ENCODE measurements at regions of chr3 and their contacts with region 1.

Region 1: GRCh38 chr3:150495563-150496168 is 50.6 kb downstream of the SERP1 start:
- DNase-seq: no peak
- ATAC-seq: peak; percentile 78
- H3K4me3 ChIP-seq: no peak overlapping the region
- H3K27ac ChIP-seq: no peak overlapping the region
- H3K4me1 ChIP-seq: no peaks in the 10 kb centered on the region
- H3K27me3 ChIP-seq: no peaks in the 10 kb centered on the region
- CTCF ChIP-seq: peak; percentile 53 to 72 (median 58)
- EP300 ChIP-seq: no peak
- POLR2A ChIP-seq: no peak
- RAD21 ChIP-seq: peak; percentile 91

Region 2: DNA sequence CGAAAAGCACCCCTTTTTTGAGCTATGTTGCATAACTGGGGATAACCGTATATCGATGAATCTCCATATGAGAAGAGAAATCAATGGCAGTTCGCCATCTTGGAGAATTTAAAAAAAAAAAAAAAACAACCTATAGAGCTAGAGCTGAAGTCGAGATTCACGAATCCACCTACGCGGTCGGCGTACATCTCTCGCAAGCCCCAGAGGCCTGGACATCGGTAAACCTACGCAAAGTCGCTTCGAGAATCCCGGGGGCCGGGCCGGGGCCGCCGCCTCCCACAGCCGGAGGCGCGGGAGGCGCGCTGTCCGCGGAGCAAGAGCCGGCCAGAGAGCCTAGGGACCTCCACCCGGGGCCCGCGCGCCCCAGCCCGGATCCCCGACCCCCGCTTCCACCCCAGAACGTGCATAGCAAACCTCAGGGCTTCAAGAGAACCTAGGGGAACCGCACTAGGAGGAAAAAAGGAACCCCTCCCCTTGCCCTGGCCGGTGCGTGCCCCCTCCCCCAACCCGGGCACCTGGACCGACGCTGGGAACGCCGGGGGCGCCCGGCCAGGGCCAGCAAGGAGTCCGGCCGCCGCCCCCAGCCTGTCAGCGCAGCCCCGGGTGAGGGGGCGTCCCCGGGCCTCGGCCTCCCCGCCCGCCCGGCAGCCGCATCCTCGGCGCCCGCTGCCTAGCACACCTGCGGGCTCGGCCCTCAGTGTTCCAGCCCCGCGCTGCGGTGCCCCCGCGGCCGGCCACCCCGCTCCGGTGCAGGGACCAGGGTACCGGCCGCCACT is 525.5 kb before region 1 on chr3:
- CTCF ChIA-PET with region 1: interaction called, 3 read pairs
- POLR2A ChIA-PET with region 1: no interaction called
- RAD21 ChIA-PET with region 1: interaction called, 3 read pairs
- SMC1A ChIA-PET with region 1: interaction called, 8 read pairs
- in situ Hi-C with region 1: loop called (anchors 25 kb)
- intact Hi-C with region 1: loop called (anchors 10 kb)
- DNase-seq: peak; percentile 39
- ATAC-seq: peak; percentile 82
- H3K4me3 ChIP-seq: peak overlapping the region; percentile 66
- H3K27ac ChIP-seq: peak overlapping the region; percentile 15; the same call in 1 of the 2 replicates
- H3K4me1 ChIP-seq: no peaks in the 10 kb centered on the region
- H3K27me3 ChIP-seq: 0 out of 4 replicates have a peak, but pooled peaks cover 0 to 4% of the 10 kb centered on the region in 2 experiments
- CTCF ChIP-seq: no peak
- EP300 ChIP-seq: no peak
- POLR2A ChIP-seq: no peak
- RAD21 ChIP-seq: no peak

Region 3: DNA sequence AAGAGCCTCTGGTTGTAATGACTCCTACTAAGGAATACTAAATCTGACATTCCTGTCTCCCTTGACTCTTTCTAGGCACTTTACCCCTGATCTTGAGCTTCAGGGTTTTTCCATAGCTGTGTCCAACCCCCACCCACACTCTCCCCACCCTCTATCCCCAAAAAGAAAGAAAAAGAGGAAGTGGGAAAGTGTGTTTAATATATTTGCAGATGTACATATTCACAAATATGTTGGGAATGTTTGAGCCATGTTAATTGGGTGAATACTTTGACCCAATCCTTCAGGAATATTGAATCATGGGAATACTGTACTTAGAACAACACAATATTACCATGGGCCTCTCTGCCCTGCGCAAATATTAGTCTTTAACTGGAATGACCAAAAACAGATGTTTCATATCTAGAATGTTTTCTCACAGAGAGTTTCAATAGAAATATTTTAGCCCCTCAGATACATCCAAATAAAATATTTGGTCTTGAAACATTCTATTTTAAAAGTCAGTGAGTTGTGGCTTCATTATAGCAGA is 505.2 kb before region 1 on chr3:
- CTCF ChIA-PET with region 1: no interaction called
- POLR2A ChIA-PET with region 1: no interaction called
- RAD21 ChIA-PET with region 1: no interaction called
- SMC1A ChIA-PET with region 1: no interaction called
- in situ Hi-C with region 1: no loop called
- intact Hi-C with region 1: no loop called
- DNase-seq: no peak
- ATAC-seq: no peak
- H3K4me3 ChIP-seq: no peak overlapping the region
- H3K27ac ChIP-seq: no peak overlapping the region
- H3K4me1 ChIP-seq: no peaks in the 10 kb centered on the region
- H3K27me3 ChIP-seq: no peaks in the 10 kb centered on the region
- CTCF ChIP-seq: no peak
- EP300 ChIP-seq: no peak
- POLR2A ChIP-seq: no peak
- RAD21 ChIP-seq: no peak

Region 4: GRCh38 chr3:150232992-150233451 is 262.6 kb before region 1 on chr3:
- CTCF ChIA-PET with region 1: interaction called, 71 read pairs
- POLR2A ChIA-PET with region 1: interaction called, 3 read pairs
- RAD21 ChIA-PET with region 1: interaction called, 31 read pairs
- SMC1A ChIA-PET with region 1: interaction called, 37 read pairs
- in situ Hi-C with region 1: loop called (anchors 5 kb)
- intact Hi-C with region 1: no loop called
- DNase-seq: no peak
- ATAC-seq: no peak
- H3K4me3 ChIP-seq: no peak overlapping the region
- H3K27ac ChIP-seq: no peak overlapping the region
- H3K4me1 ChIP-seq: no peaks in the 10 kb centered on the region
- H3K27me3 ChIP-seq: no peaks in the 10 kb centered on the region
- CTCF ChIP-seq: no peak
- EP300 ChIP-seq: no peak
- POLR2A ChIP-seq: no peak
- RAD21 ChIP-seq: no peak

Region 5: DNA sequence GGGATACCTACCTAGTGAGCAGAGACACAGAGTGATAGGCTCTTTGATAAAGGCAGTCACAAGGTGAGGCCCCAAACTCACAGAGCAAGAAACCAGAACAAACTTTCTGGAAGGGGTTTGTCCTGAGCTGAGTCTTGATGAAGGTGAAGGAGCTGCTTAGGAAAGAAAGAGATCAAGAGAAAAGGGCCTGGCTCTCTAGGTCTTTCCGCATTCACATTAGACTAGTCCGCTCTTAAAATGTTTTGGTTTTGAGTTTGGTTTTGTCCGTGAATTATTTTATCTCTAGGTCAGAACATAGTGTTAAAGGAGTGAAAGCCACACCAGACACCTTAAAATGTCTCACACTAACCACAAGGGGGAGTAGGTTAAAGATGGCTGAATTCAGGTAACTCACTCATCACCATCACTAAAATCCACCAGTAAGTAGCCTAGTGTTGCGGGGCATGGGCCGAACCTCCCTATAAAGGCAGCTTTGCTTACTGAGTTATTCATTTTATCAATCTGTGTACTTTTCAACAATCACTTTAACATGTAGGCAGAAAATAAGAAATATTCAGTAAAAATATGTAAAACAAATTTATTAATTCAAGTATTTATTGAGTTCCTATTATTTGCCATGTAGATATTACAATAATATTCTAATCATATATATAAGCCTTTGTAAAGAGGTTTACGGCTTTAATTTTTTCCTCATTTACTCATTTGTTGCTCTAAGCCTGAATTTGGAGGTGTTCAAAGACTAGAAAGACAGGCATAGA is 209.1 kb before region 1 on chr3:
- CTCF ChIA-PET with region 1: interaction called, 46 read pairs
- POLR2A ChIA-PET with region 1: no interaction called
- RAD21 ChIA-PET with region 1: interaction called, 29 read pairs
- SMC1A ChIA-PET with region 1: interaction called, 18 read pairs
- in situ Hi-C with region 1: loop called (anchors 5 kb)
- intact Hi-C with region 1: loop called (anchors 1 kb)
- DNase-seq: peak; percentile 15
- ATAC-seq: peak; percentile 99
- H3K4me3 ChIP-seq: no peak overlapping the region
- H3K27ac ChIP-seq: no peak overlapping the region
- H3K4me1 ChIP-seq: no peaks in the 10 kb centered on the region
- H3K27me3 ChIP-seq: no peaks in the 10 kb centered on the region
- CTCF ChIP-seq: peak; percentile 52 to 60 (median 57); a peak in 5 of 6 replicates
- EP300 ChIP-seq: no peak
- POLR2A ChIP-seq: no peak
- RAD21 ChIP-seq: peak; percentile 75

Region 6: GRCh38 chr3:150384296-150385212 is 111.1 kb before region 1 on chr3:
- CTCF ChIA-PET with region 1: interaction called, 3 read pairs
- POLR2A ChIA-PET with region 1: interaction called, 8 read pairs
- RAD21 ChIA-PET with region 1: interaction called, 3 read pairs
- SMC1A ChIA-PET with region 1: interaction called, 6 read pairs
- in situ Hi-C with region 1: no loop called
- intact Hi-C with region 1: loop called (anchors 1 kb)
- DNase-seq: peak; percentile 97
- ATAC-seq: peak; percentile 92
- H3K4me3 ChIP-seq: peak overlapping the region; percentile 58
- H3K27ac ChIP-seq: peak overlapping the region; percentile 99
- H3K4me1 ChIP-seq: peaks cover 23% of the 10 kb centered on the region
- H3K27me3 ChIP-seq: no peaks in the 10 kb centered on the region
- CTCF ChIP-seq: peak; percentile 35 to 61 (median 60)
- EP300 ChIP-seq: no peak
- POLR2A ChIP-seq: peak; percentile 59
- RAD21 ChIP-seq: peak; percentile 47; the same call in 1 of the 2 replicates

Region 7: DNA sequence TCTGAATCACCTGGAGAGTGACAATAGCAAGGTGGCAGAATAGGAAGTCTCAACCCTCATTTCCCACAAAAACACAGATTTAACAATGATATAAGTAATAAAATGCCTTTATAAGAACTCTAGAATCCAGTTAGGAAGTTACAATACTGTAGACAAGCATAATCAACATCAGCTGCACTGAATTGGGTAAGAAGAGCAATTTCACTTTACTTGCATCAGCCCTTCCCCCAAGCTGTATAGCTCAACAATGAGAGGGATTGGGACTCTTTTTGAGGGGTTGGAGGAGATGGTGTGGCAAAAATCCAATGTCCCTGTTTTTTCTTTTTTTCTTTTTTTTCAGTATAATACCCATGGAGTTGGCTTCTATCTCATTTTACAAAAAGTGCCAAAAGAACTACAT is 12.4 kb before region 1 on chr3:
- CTCF ChIA-PET with region 1: interaction called, 4 read pairs
- POLR2A ChIA-PET with region 1: no interaction called
- RAD21 ChIA-PET with region 1: no interaction called
- SMC1A ChIA-PET with region 1: interaction called, 11 read pairs
- in situ Hi-C with region 1: no loop called
- intact Hi-C with region 1: no loop called
- DNase-seq: no peak
- ATAC-seq: no peak
- H3K4me3 ChIP-seq: no peak overlapping the region
- H3K27ac ChIP-seq: no peak overlapping the region
- H3K4me1 ChIP-seq: no peaks in the 10 kb centered on the region
- H3K27me3 ChIP-seq: no peaks in the 10 kb centered on the region
- CTCF ChIP-seq: no peak
- EP300 ChIP-seq: no peak
- POLR2A ChIP-seq: no peak
- RAD21 ChIP-seq: no peak

Region 8: DNA sequence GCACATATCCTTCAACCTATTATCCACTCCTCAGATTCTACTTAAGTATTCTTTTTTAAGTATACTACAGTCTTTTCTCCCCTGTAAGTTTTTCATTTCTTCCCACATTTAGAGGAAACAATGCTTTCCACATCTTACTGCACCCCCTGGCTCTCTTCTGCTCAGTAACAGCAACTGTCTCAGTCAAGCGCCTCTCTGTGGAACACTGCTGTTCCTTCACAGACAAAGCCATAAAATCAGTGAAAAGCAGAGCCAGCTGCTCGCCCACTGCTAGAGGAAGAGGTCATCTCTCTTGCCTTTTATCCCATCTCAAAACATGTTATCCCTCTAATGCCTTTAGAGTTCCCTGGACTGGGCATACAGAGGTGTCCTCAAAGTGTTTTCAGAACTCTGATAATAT is 25.8 kb after region 1 on chr3:
- CTCF ChIA-PET with region 1: no interaction called
- POLR2A ChIA-PET with region 1: no interaction called
- RAD21 ChIA-PET with region 1: no interaction called
- SMC1A ChIA-PET with region 1: no interaction called
- in situ Hi-C with region 1: no loop called
- intact Hi-C with region 1: no loop called
- DNase-seq: no peak
- ATAC-seq: no peak
- H3K4me3 ChIP-seq: no peak overlapping the region
- H3K27ac ChIP-seq: no peak overlapping the region
- H3K4me1 ChIP-seq: no peaks in the 10 kb centered on the region
- H3K27me3 ChIP-seq: no peaks in the 10 kb centered on the region
- CTCF ChIP-seq: no peak
- EP300 ChIP-seq: no peak
- POLR2A ChIP-seq: no peak
- RAD21 ChIP-seq: no peak

Region 9: DNA sequence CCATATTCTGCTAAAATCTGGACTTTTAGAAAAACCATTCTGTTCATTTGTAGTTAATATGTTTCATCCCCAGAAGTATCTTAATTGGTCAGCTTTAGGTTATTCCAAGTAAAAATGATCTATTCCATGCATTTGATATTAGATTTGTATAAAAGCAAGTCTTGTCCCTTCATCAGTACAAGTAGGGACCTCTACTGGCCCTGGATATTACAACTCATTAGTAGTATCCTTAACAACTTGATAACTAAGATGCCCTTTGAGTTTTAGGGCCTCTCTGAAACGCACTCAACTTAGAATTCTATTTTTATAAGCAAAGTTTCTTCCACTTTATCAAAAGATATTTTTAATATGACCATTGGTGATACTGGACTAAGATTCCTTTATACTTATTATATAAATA is 82.2 kb after region 1 on chr3:
- CTCF ChIA-PET with region 1: no interaction called
- POLR2A ChIA-PET with region 1: no interaction called
- RAD21 ChIA-PET with region 1: no interaction called
- SMC1A ChIA-PET with region 1: no interaction called
- in situ Hi-C with region 1: no loop called
- intact Hi-C with region 1: no loop called
- DNase-seq: no peak
- ATAC-seq: no peak
- H3K4me3 ChIP-seq: no peak overlapping the region
- H3K27ac ChIP-seq: no peak overlapping the region
- H3K4me1 ChIP-seq: peaks cover 10% of the 10 kb centered on the region
- H3K27me3 ChIP-seq: no peaks in the 10 kb centered on the region
- CTCF ChIP-seq: no peak; a peak in 1 of 6 replicates
- EP300 ChIP-seq: no peak
- POLR2A ChIP-seq: no peak
- RAD21 ChIP-seq: no peak